ENCODE measurements at regions of chr17 and their contacts with region 1.

Region 1: DNA sequence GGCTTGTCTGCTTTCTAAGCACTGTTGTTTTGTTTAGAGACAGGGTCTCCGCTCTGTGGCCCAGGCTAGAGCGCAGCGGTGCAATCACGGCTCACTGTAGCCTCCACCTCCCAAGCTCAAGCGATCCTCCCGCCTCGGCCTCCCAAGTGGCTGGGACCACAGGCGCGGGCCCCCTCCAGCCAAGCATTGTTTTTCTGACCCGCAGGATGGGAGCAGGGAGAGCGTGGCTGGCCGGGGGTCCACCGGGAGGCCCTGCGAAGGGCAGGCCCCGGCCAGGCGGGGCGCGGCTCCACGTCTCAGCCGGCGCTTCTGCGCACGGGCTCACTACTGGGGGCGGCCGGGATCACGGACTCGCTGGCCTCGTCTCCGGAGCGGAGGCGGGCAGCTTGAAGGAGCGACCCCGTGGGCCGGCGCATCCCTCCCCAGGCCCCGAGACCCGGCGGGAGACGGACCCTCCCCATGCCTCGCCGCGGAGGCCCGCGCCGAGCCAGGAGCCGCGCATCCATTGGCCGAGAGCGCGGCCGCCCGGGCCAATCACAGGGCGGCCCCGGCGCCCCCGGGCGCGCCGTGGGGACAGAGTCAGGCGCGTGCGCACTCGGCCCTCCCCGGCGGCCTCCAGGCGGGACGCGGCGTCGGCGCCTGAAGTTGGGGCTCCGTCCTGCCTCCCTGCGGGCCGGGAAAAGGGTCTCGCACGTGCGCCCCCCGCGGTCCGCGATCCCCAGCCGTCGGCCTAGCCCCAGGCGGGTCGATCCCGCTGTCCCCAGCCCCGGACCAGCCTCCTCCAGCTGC is 24.9 kb downstream of the ACTG1 start:
- DNase-seq: peak; percentile 91
- H3K4me3 ChIP-seq: peak overlapping the region; percentile 50
- H3K27ac ChIP-seq: peak overlapping the region; percentile 96
- H3K4me1 ChIP-seq: peaks cover 65% of the 10 kb centered on the region
- H3K27me3 ChIP-seq: no peaks in the 10 kb centered on the region
- CTCF ChIP-seq: no peak

Region 2: GRCh38 chr17:81253358-81254131 is 234.1 kb before region 1 on chr17:
- CTCF ChIA-PET with region 1: interaction called, 7 read pairs
- POLR2A ChIA-PET with region 1: no interaction called
- intact Hi-C with region 1: loop called (anchors 2 kb)
- DNase-seq: peak; percentile 59
- H3K4me3 ChIP-seq: no peak overlapping the region
- H3K27ac ChIP-seq: no peak overlapping the region
- H3K4me1 ChIP-seq: peaks cover 29% of the 10 kb centered on the region
- H3K27me3 ChIP-seq: no peaks in the 10 kb centered on the region
- CTCF ChIP-seq: peak; percentile 82

Region 3: DNA sequence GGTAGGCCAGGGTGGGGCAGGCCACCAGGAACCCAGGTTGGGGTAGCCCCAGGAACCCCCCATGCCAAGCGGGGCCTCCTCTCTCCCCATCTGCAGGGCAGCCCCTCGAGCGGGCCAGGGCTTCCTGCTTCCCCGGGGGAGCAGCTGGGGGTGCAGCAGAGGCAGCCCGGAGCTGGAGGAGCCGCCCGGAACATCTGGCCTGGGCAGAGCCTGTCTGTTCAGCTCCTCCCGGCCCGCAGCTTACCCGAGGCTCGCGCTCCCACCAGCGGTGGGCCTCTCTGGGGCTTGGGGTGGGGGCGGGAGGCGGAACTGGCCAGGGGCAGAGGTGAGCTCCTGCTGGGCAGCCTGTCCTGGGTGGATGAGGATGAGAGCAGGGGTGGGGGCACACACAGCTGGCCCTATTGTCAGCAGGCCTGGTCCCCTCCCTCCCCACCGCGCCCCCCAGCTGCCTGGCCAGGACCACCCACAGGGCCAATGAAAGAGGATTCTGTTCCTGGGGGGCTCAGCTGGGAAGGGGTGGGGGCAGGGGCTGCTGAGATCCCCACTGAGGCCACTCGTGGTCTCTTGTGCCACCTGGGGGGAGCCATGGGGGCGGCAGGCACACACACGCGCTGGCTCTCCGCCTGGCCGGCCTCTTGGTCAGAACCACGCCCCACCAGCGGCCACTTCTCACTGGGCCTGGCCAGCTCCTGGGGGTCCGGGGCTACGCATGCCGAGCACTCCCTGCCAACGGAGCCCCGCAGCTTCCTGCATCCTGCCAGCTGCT is 57.7 kb before region 1 on chr17:
- CTCF ChIA-PET with region 1: interaction called, 3 read pairs
- POLR2A ChIA-PET with region 1: interaction called, 11 read pairs
- intact Hi-C with region 1: no loop called
- DNase-seq: peak; percentile 71
- H3K4me3 ChIP-seq: peak overlapping the region; percentile 21
- H3K27ac ChIP-seq: peak overlapping the region; percentile 65
- H3K4me1 ChIP-seq: peaks cover 39% of the 10 kb centered on the region
- H3K27me3 ChIP-seq: no peaks in the 10 kb centered on the region
- CTCF ChIP-seq: 0 out of 2 replicates have a peak, but pooled peaks have one; percentile 5

Measured in A673 (cell line).